ENCODE measurements at regions of chr19 and their contacts with region 1.

Region 1: GRCh38 chr19:44164673-44165512 is at the start of gene ZNF226:
- DNase-seq: peak; percentile 93
- H3K4me3 ChIP-seq: peak within 1 kb of the TSS; percentile 66
- H3K27ac ChIP-seq: peak within 1 kb of the TSS; percentile 76
- H3K4me1 ChIP-seq: peaks cover 4% of the 10 kb centered on the region
- H3K27me3 ChIP-seq: no peaks in the 10 kb centered on the region
- CTCF ChIP-seq: no peak
- total RNA-seq, gene ZNF226: 12.9 to 15.5 TPM

Region 2: DNA sequence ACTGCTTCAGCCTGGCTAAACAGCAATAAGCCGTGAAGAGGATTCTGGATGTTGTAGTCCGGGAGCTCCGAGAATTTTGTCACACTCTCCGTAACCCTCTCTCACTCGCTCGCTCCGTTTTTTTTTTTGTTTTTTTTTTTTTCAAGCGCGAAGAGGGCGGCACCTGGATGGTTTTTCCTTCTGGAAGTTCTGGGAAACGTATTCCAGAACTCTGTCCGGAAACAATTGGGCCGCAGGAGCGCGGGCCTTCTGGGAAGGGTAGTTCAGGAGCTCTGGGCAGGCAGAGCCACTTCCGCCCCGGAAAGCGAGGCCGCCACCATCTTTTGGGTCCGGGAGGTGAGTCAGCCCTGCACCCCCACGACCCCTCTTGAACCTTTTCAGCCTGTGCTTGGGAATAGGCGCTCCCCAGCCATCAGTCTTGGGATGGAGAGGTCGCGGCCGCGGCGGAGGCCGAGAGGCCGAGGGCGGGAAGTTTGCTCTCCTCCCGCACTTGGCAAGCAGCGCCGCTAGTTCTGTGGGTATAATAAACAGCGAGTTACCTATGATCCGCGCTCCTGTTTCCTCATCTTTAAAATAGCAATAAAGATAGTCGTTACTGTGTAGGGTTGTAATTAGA is 47.5 kb after region 1 on chr19 and contains the start of gene ZNF227:
- intact Hi-C with region 1: loop called (anchors 10 kb)
- DNase-seq: peak; percentile 92
- H3K4me3 ChIP-seq: peak within 1 kb of the TSS; percentile 71
- H3K27ac ChIP-seq: peak within 1 kb of the TSS; percentile 82
- H3K4me1 ChIP-seq: no peaks in the 10 kb centered on the region
- H3K27me3 ChIP-seq: no peaks in the 10 kb centered on the region
- CTCF ChIP-seq: no peak
- total RNA-seq, gene ZNF227: 9.9 to 12.3 TPM

Measured in colonic mucosa (tissue), 4 donors.